ENCODE measurements at regions of chr1 and their contacts with region 1.

Region 1: DNA sequence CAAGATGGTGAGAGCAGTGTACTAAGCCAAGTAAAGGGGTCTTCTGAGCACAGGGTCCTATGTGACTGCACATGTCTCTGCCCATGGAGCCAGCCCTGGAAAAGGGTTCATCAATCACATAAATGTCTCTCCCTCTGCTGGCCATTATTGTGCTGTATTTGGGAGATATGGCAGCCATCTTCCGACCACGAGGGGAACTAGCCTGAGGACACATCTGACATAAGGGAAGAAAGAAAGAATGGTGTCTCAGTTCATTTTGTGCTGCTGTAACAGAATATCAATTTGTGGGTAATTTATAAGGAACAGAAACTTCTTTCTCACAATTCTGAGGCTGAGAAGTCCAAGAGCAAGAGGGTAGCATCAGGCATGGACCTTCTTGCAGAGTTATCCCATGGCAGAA is 55.1 kb upstream of the GJA5 start:
- DNase-seq: no peak
- H3K4me3 ChIP-seq: no peak overlapping the region
- H3K27ac ChIP-seq: no peak overlapping the region
- H3K4me1 ChIP-seq: no peaks in the 10 kb centered on the region
- H3K27me3 ChIP-seq: no peaks in the 10 kb centered on the region
- CTCF ChIP-seq: peak in 1 of 3 experiments; percentile 17

Region 2: DNA sequence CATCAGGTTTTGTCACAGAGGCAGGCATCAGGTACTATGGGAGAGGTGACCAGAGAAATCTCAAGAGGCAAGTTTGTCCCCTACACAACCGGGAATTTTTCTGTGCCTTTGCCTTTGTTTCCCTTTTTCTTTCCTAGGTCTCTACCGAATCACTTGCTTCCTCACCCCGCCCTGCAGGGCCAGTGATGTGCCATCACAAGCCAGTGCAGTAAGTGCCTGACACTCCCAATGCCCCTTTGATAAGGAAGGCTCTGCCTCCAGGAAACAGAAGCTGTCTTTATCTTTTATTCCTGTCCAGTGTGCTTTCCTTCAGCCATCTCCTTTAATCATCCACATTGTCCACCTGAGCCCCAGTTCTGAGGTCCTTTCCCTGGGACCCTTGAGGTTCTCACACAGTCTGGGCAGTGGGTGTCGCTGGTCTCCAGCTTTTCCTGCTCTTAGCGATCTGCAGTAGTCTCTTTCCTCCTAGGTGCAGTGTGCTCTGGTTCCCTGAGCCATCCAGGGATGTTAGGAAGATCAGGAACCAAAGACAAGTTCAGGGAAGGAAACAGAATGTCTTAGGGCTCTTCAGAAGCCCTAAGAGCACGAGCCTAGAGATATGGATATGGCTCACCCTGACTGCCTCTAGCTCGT is 91.7 kb before region 1 on chr1:
- intact Hi-C with region 1: loop called (anchors 10 kb)
- DNase-seq: no peak
- H3K4me3 ChIP-seq: no peak overlapping the region
- H3K27ac ChIP-seq: no peak overlapping the region
- H3K4me1 ChIP-seq: no peaks in the 10 kb centered on the region
- H3K27me3 ChIP-seq: no peaks in the 10 kb centered on the region
- CTCF ChIP-seq: peak; percentile 74 to 84 (median 76)

Measured in ascending aorta (tissue), 2 donors.